Lower leg skin (tissue), 4 donors: ENCODE measurements at regions of chr19 and their contacts with region 1.

Region 1: GRCh38 chr19:4208385-4209094 is 20.8 kb upstream of the EBI3 start:
- DNase-seq: no peak
- H3K4me3 ChIP-seq: no peak overlapping the region
- CTCF ChIP-seq: no peak
- POLR2A ChIP-seq: no peak

Region 2: GRCh38 chr19:4139614-4140236 is 68.8 kb before region 1 on chr19:
- intact Hi-C with region 1: loop called (anchors 10 kb)
- DNase-seq: peak; percentile 69 to 97
- H3K4me3 ChIP-seq: no peak overlapping the region
- CTCF ChIP-seq: no peak
- POLR2A ChIP-seq: no peak

Region 3: DNA sequence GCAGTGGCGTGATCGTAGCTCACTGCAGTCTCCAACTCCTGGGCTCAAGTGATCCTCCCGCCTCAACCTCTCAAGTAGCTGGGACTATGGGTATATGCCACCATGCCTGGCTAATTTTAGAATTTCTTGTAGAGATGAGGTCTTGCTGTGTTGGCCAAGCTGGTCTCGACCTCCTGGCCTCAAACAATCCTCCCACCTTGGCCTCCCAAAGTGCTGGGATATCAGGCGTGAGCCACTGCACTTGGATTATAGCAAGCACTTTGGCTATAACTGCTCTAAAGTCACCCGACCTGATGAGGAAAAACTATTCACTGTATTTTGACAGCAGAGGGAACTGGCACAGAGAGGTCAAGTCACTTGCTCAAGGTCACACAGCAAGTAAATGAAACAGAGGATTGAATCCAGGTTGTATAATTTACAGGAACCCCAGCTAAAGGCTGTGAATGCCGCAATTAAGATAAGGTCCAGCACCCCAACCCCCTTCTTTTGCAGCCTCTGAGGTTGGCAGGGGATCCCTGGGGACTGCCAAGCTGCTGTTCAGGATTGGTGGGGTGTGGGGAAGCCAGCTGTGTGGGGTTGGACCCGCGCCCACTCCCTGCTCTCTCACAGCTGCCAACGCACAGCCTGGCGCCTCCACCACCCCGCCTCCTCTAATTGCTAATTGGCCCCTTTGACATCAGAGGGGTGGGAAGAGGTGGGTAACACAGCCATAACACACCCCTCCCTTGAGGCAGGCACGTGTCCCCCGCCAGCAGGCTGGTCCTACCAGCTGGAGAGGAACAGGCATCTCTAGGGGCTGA is 87.6 kb after region 1 on chr19:
- intact Hi-C with region 1: no loop called
- DNase-seq: no peak
- H3K4me3 ChIP-seq: no peak overlapping the region
- CTCF ChIP-seq: no peak
- POLR2A ChIP-seq: no peak

Region 4: DNA sequence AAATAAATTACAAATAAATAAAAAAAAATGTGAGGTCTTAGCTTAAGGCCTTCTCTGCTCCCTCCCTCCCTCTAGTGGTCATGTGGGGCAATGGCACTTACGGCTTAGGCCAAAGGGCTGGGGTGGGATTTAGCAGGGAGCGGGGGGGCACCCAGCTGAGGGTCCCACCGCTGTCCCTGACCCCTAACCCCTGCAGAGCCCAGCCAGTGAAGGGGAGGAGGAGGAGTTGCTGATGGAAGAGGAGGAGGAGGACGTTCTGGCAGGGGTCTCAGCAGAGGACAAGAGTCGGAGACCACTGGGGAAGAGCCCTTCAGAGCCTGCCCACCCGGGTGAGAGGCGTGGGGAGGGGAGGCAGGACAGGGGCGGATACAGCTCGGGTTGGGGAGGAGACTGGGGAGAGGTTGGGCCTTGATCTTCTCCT is 144.2 kb after region 1 on chr19:
- intact Hi-C with region 1: no loop called
- DNase-seq: peak in 1 of 2 donors; percentile 86
- H3K4me3 ChIP-seq: no peak overlapping the region
- CTCF ChIP-seq: no peak
- POLR2A ChIP-seq: no peak

Region 5: GRCh38 chr19:5775668-5776309 is 1567.2 kb after region 1 on chr19:
- intact Hi-C with region 1: no loop called
- DNase-seq: no peak
- H3K4me3 ChIP-seq: no peak overlapping the region
- CTCF ChIP-seq: no peak
- POLR2A ChIP-seq: no peak